HEK293 (cell line): ENCODE measurements at regions of chr1 and their contacts with region 1.

Region 1: DNA sequence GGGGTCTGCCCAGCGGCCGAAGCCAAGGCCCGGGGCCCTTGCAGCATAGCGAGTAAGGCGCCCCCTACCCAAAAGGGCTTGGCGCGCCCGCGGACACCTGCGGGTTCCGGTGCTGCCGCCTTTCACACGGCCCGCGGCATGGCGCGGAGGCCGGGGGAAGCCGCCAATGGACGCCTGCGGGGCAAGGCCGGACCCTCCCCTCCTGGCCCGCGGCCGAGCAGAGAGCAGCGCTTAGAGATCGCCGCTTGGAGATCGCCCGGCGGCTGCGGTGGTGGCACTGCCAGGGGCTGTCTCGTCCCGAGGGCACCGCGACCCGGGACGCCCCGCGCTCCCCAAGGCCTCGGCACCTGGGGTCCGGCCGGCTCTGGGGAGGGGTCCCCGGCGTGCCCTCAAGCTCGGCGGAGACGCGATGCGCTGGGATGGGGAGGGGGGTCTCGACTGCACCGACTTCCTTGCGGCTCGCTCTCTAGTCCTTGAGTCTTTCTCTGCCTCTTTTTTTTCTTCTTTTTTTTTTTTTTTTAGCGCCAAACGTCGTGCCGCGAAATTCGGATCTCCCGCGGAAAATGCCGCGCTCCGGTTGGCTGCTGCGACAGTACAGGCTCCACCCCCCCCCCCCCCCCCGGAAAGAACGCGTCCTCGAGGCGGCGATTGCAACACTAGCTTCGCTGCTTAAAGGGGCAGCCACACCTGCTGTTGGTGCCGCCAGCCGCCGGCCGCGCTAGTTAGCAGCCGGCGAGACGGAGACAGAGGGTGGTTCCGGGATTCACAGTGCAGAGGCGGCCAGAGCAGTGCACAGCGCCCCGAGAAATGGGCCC is at the start of gene E2F2:
- H3K4me3 ChIP-seq: peak within 1 kb of the TSS; percentile 69
- H3K27ac ChIP-seq: peak within 1 kb of the TSS; percentile 89
- H3K4me1 ChIP-seq: peaks cover 2% of the 10 kb centered on the region; the same call in 1 of the 2 replicates
- CTCF ChIP-seq: peak; percentile 84

Region 2: GRCh38 chr1:23577056-23578004 is 46.4 kb after region 1 on chr1:
- CTCF ChIA-PET with region 1: no interaction called
- POLR2A ChIA-PET with region 1: no interaction called
- H3K4me3 ChIP-seq: no peak overlapping the region
- H3K27ac ChIP-seq: peak overlapping the region; percentile 26; the same call in 1 of the 2 replicates
- H3K4me1 ChIP-seq: no peaks in the 10 kb centered on the region
- CTCF ChIP-seq: no peak

Region 3: GRCh38 chr1:23643736-23644554 is 113.0 kb after region 1 on chr1:
- CTCF ChIA-PET with region 1: no interaction called
- POLR2A ChIA-PET with region 1: interaction called, 10 read pairs
- H3K4me3 ChIP-seq: no peak overlapping the region
- H3K27ac ChIP-seq: peak overlapping the region; percentile 37; the same call in 1 of the 2 replicates
- H3K4me1 ChIP-seq: peaks cover 14% of the 10 kb centered on the region
- CTCF ChIP-seq: no peak

Region 4: GRCh38 chr1:23718482-23718881 is 187.5 kb after region 1 on chr1:
- CTCF ChIA-PET with region 1: no interaction called
- POLR2A ChIA-PET with region 1: no interaction called
- H3K4me3 ChIP-seq: no peak overlapping the region
- H3K27ac ChIP-seq: no peak overlapping the region
- H3K4me1 ChIP-seq: 0 out of 2 replicates have a peak, but pooled peaks cover 2% of the 10 kb centered on the region
- CTCF ChIP-seq: peak; percentile 39